ENCODE measurements at regions of chr5 and their contacts with region 1.

Region 1: DNA sequence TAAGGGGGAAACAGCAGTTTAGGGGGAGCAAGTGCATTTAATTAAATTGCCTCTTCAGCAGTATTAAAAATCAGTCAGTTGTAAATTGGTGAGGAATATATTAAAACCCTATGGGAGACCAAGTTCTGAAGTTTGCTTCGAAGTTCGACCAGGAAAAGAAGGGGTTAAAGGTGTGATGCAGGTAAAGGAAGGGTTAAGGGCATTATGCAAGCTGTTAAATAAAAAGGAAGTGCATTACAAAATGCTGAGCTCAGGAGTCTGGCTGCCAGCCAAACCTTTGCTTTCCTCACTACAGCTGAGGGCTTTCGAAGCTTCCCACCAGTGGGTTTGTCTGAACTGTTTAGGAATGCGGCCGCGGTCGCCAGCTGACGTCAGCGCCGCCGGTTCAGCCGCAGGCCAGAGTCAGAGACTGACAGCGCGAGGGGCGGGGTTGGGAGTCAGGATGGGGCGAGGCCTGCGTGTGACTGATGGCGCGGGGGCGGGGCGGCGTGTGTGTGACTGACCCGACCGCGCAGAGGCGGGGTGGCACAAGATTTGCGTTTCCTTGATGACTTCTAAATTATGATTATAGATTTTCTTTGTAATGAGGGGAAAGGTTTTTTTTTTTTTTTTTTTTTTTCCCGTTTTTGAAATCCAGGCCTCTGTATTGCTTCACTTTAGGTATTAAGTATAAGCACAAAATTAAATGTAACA is 76.6 kb downstream of the ZSWIM6 start:
- DNase-seq: peak; percentile 97
- ATAC-seq: peak; percentile 96
- H3K4me3 ChIP-seq: peak overlapping the region; percentile 57
- H3K27ac ChIP-seq: peak overlapping the region; percentile 97
- H3K4me1 ChIP-seq: peaks cover 23% of the 10 kb centered on the region
- H3K27me3 ChIP-seq: no peaks in the 10 kb centered on the region
- CTCF ChIP-seq: no peak

Region 2: GRCh38 chr5:61339764-61340163 is 68.9 kb before region 1 on chr5:
- CTCF ChIA-PET with region 1: no interaction called
- POLR2A ChIA-PET with region 1: no interaction called
- intact Hi-C with region 1: loop called (anchors 2 kb)
- DNase-seq: no peak
- ATAC-seq: no peak
- H3K4me3 ChIP-seq: no peak overlapping the region
- H3K27ac ChIP-seq: no peak overlapping the region
- H3K4me1 ChIP-seq: peaks cover 18% of the 10 kb centered on the region
- H3K27me3 ChIP-seq: no peaks in the 10 kb centered on the region
- CTCF ChIP-seq: no peak

Region 3: GRCh38 chr5:61467766-61468482 is 59.3 kb after region 1 on chr5:
- CTCF ChIA-PET with region 1: no interaction called
- POLR2A ChIA-PET with region 1: no interaction called
- intact Hi-C with region 1: loop called (anchors 2 kb)
- DNase-seq: peak; percentile 43
- ATAC-seq: peak; percentile 80
- H3K4me3 ChIP-seq: no peak overlapping the region
- H3K27ac ChIP-seq: no peak overlapping the region
- H3K4me1 ChIP-seq: peaks cover 13% of the 10 kb centered on the region
- H3K27me3 ChIP-seq: no peaks in the 10 kb centered on the region
- CTCF ChIP-seq: no peak